Right cardiac atrium (tissue), 5 donors: ENCODE measurements at regions of chr18 and their contacts with region 1.

Region 1: GRCh38 chr18:2547477-2548087 is 23.7 kb downstream of the METTL4 start:
- DNase-seq: no peak
- ATAC-seq: no peak
- H3K4me3 ChIP-seq: no peak overlapping the region
- H3K27ac ChIP-seq: no peak overlapping the region
- H3K4me1 ChIP-seq: no peaks in the 10 kb centered on the region
- H3K27me3 ChIP-seq: no peaks in the 10 kb centered on the region

Region 2: GRCh38 chr18:864872-865273 is 1682.7 kb before region 1 on chr18:
- intact Hi-C with region 1: loop called in 2 of 4 experiments (anchors 10 kb)
- DNase-seq: peak; percentile 66 to 84 (median 81)
- ATAC-seq: peak; percentile 86
- H3K4me3 ChIP-seq: no peak overlapping the region
- H3K27ac ChIP-seq: no peak overlapping the region
- H3K4me1 ChIP-seq: no peaks in the 10 kb centered on the region
- H3K27me3 ChIP-seq: peaks cover 2% of the 10 kb centered on the region

Region 3: GRCh38 chr18:1585879-1586488 is 961.6 kb before region 1 on chr18:
- intact Hi-C with region 1: loop called in 2 of 4 experiments (anchors 5 to 10 kb)
- DNase-seq: no peak
- ATAC-seq: peak; percentile 54 to 59
- H3K4me3 ChIP-seq: no peak overlapping the region
- H3K27ac ChIP-seq: no peak overlapping the region
- H3K4me1 ChIP-seq: no peaks in the 10 kb centered on the region
- H3K27me3 ChIP-seq: no peaks in the 10 kb centered on the region

Region 4: GRCh38 chr18:2104620-2105462 is 442.7 kb before region 1 on chr18:
- intact Hi-C with region 1: loop called in 2 of 4 experiments (anchors 5 to 10 kb)
- DNase-seq: peak; percentile 35 to 70 (median 62)
- ATAC-seq: peak; percentile 64 to 70
- H3K4me3 ChIP-seq: no peak overlapping the region
- H3K27ac ChIP-seq: no peak overlapping the region
- H3K4me1 ChIP-seq: no peaks in the 10 kb centered on the region
- H3K27me3 ChIP-seq: no peaks in the 10 kb centered on the region

Region 5: DNA sequence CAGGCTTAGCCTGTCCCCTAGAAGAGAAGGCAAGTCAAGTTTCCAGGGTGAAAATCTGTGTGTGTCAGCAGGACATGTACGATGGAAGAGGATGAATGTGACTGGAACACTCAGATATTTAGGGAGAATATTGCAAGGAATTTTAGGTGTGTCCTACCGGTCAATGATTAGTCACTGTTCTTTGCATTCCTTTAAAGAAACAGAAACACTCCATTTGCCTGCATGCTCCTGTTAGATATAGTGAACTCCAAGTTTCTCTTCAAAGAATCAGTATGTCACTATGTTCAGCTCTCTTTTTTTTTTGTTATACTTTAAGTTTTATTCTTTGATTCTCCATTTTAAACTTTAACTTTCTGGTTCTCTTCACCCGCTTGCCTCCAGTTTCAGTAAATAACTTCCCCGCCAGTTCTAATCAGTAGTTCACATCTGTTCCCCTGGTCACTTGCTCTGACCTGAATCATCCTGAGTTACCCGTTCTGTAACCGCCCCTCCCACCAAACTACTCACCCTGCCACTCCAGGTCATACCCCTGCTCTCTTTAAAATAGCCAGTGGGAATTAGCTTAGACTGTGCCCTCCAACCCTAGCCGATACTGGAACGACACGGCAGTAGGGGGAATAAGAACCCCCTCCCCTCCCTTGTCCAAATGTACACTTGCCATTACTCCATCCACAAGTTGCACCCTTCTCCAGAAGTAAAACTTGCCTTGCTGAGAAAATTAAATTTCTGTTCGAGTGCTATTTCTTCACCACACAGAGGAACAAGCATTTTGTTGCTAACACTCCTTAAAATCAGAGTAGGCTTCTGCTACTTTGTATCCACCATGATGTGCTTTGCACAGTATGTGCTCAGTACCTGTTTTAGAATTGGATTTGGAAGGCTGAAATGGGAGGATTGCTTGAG is 244.7 kb before region 1 on chr18:
- intact Hi-C with region 1: no loop called
- DNase-seq: no peak
- ATAC-seq: no peak
- H3K4me3 ChIP-seq: no peak overlapping the region
- H3K27ac ChIP-seq: no peak overlapping the region
- H3K4me1 ChIP-seq: no peaks in the 10 kb centered on the region
- H3K27me3 ChIP-seq: no peaks in the 10 kb centered on the region

Region 6: DNA sequence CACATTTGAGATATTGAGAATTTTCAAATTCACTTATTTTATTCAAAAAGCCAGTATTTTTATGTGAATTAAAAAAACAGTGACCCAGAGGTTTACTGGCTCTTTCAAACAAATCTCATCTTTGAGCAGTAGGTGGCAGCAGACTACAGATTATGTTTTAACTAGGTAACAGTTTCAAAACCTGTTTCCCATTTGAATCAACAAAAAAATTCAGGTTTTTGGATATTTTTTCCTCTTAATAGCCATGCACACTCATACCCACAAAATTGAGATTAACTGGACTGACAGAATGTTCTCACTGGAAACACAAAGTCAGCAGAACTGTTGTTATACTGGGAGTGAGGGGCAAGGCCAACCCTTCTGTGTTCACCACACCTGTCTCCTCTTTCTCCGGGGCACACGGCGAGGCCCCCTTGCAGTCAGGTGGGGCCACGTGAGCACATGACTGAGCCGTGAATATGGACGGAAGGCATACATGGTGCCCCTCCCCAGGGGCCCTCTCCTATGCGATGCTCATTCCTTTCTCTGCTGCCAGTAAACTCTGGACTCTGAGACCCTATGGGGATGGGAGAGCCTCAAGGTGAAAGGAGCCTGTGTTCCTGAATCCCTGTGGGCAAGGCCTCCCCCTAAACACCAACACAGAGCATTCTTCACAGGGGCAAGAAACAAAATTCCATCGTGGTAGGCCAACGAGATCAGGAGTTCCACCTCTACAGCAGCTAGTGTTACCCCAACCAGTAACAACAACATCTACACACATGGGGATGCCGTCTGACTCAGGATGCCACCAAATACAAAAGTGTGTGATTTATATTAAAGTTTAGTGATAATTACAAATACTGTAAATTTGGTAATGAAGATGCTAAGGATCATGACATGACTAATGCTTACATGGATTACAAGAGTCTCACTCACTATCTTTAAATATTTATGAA is 384.9 kb after region 1 on chr18:
- intact Hi-C with region 1: no loop called
- DNase-seq: no peak
- ATAC-seq: peak; percentile 55 to 58
- H3K4me3 ChIP-seq: no peak overlapping the region
- H3K27ac ChIP-seq: no peak overlapping the region
- H3K4me1 ChIP-seq: no peaks in the 10 kb centered on the region
- H3K27me3 ChIP-seq: no peaks in the 10 kb centered on the region